Mammary epithelial cell (primary cell): ENCODE measurements at regions of chr2 and their contacts with region 1.

Region 1: GRCh38 chr2:23207871-23208270 is 177.1 kb upstream of the KLHL29 start:
- DNase-seq: no peak
- H3K4me3 ChIP-seq: no peak overlapping the region
- H3K27ac ChIP-seq: no peak overlapping the region
- H3K4me1 ChIP-seq: no peaks in the 10 kb centered on the region
- H3K27me3 ChIP-seq: no peaks in the 10 kb centered on the region
- CTCF ChIP-seq: no peak

Region 2: GRCh38 chr2:23346029-23346428 is 138.2 kb after region 1 on chr2:
- CTCF ChIA-PET with region 1: no interaction called
- dilution Hi-C with region 1: no loop called
- in situ Hi-C with region 1: loop called in 1 of 2 experiments (anchors 10 kb)
- intact Hi-C with region 1: no loop called
- DNase-seq: no peak
- H3K4me3 ChIP-seq: no peak overlapping the region
- H3K27ac ChIP-seq: no peak overlapping the region
- H3K4me1 ChIP-seq: no peaks in the 10 kb centered on the region
- H3K27me3 ChIP-seq: no peaks in the 10 kb centered on the region
- CTCF ChIP-seq: no peak